Activated naive CD4-positive, alpha-beta T cell treated with anti-CD3 and anti-CD28 coated beads for 36 hours (primary cell): ENCODE measurements at regions of chr17 and their contacts with region 1.

Region 1: GRCh38 chr17:68457539-68458259 is 403 bp upstream of the WIPI1 start:
- DNase-seq: peak; percentile 96
- H3K4me3 Mint-ChIP-seq: peak overlapping the region; percentile 75
- H3K27ac Mint-ChIP-seq: peak overlapping the region; percentile 68
- H3K4me1 Mint-ChIP-seq: peaks cover 53% of the 10 kb centered on the region
- H3K27me3 Mint-ChIP-seq: peaks cover 2% of the 10 kb centered on the region

Region 2: GRCh38 chr17:67717624-67718329 is 739.9 kb before region 1 on chr17 and contains the start of gene NOL11:
- CTCF ChIA-PET with region 1: no interaction called
- intact Hi-C with region 1: loop called (anchors 2 kb)
- DNase-seq: peak; percentile 100
- H3K4me3 Mint-ChIP-seq: peak within 1 kb of the TSS; percentile 100
- H3K27ac Mint-ChIP-seq: peak within 1 kb of the TSS; percentile 99
- H3K4me1 Mint-ChIP-seq: peaks cover 20% of the 10 kb centered on the region
- H3K27me3 Mint-ChIP-seq: peaks cover 3% of the 10 kb centered on the region
- total RNA-seq, gene NOL11: 49.7 to 54.1 TPM

Region 3: GRCh38 chr17:68172461-68172954 is 285.2 kb before region 1 on chr17:
- CTCF ChIA-PET with region 1: interaction called, 22 read pairs
- intact Hi-C with region 1: no loop called
- DNase-seq: peak; percentile 86
- H3K4me3 Mint-ChIP-seq: no peak overlapping the region
- H3K27ac Mint-ChIP-seq: no peak overlapping the region
- H3K4me1 Mint-ChIP-seq: peaks cover 15% of the 10 kb centered on the region
- H3K27me3 Mint-ChIP-seq: no peaks in the 10 kb centered on the region

Region 4: DNA sequence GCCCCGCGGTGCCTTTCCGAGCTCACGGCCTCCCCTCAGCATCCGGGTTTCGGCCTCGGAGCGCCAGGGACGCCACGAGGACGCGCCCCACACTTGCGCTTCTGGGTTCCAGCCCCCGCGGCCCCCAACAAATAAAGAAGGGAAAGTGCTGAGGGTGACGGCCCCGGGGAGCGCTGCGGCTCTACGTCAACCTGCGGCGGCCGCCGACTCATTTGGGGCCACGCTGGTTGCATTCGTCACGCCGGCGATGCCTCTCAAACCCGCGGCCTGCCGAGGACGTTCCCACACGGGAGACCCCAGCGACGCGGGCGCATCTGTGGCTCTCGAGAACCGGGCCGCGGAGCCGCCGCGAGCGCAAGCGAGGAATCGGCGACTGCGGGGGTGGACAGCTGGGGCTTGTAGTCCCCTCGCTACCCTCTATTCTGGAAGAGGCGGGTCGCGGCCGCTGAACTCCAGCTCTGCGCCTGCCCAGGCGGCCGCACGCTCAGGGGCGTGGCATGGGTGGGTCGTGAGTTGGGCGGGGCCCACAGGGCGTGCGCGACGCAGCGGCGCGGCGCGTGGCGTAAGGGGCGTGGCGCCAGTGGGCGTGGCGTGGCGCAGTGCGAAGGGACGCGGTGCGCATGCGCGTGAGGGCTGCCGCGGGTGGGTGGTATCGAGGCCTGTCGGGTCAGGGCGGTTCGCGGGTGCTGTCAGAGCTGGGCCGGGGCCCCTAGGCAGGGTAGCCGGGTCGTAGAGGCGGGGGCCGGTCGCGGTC is 210.1 kb before region 1 on chr17 and contains the start of gene AMZ2:
- CTCF ChIA-PET with region 1: no interaction called
- intact Hi-C with region 1: loop called (anchors 1 kb)
- DNase-seq: peak; percentile 94
- H3K4me3 Mint-ChIP-seq: peak within 1 kb of the TSS; percentile 89
- H3K27ac Mint-ChIP-seq: peak within 1 kb of the TSS; percentile 95
- H3K4me1 Mint-ChIP-seq: peaks cover 31% of the 10 kb centered on the region
- H3K27me3 Mint-ChIP-seq: no peaks in the 10 kb centered on the region
- total RNA-seq, gene AMZ2: 190 to 195 TPM

Region 5: GRCh38 chr17:68398691-68399637 is 58.7 kb before region 1 on chr17:
- CTCF ChIA-PET with region 1: interaction called, 3 read pairs
- intact Hi-C with region 1: loop called (anchors 2 kb)
- DNase-seq: peak; percentile 56
- H3K4me3 Mint-ChIP-seq: no peak overlapping the region
- H3K27ac Mint-ChIP-seq: peak overlapping the region; percentile 43
- H3K4me1 Mint-ChIP-seq: peaks cover 27% of the 10 kb centered on the region
- H3K27me3 Mint-ChIP-seq: no peaks in the 10 kb centered on the region

Region 6: DNA sequence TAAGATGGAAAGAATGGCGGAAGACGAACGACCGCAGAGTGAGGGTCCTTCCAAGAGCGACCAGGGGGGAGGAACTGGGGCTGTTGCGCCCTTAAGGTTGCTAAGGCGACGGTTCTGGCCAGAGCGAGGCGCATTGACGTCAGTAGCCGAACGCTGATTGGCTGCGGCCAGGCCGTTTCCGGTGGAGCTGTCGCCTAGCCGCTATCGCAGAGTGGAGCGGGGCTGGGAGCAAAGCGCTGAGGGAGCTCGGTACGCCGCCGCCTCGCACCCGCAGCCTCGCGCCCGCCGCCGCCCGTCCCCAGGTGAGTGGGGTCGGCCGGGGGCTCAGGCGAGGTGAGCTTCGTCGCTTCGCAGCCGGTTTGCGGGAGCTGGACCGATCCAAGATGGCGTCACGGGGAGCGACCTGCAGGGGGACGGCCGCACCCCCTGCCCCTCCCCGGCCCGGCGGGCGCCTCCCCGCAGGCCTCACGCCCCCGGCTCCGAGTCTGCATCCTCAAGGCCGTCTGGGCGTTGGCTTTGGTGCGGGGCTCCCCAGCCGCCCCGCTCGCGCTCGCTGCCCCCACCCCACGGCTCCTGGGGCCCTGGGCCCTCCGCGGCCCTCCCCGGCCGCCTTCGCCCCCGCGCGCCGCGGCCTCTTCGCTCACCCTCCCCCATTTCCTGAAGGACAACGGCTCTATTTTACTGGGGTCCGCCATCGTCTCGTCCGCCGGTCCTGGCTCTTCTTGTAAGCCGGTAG is 54.7 kb after region 1 on chr17 and contains the start of gene PRKAR1A:
- CTCF ChIA-PET with region 1: interaction called, 3 read pairs
- intact Hi-C with region 1: loop called (anchors 1 kb)
- DNase-seq: peak; percentile 95
- H3K4me3 Mint-ChIP-seq: peak within 1 kb of the TSS; percentile 99
- H3K27ac Mint-ChIP-seq: peak within 1 kb of the TSS; percentile 99
- H3K4me1 Mint-ChIP-seq: peaks cover 41% of the 10 kb centered on the region
- H3K27me3 Mint-ChIP-seq: no peaks in the 10 kb centered on the region
- total RNA-seq, gene PRKAR1A: 151 TPM